A549 (cell line): ENCODE measurements at regions of chr3 and their contacts with region 1.

Region 1: GRCh38 chr3:190566043-190566933 is 52.4 kb downstream of the IL1RAP start:
- DNase-seq: peak; percentile 62 to 98
- ATAC-seq: peak; percentile 98 to 99
- H3K4me3 ChIP-seq: no peak overlapping the region
- H3K27ac ChIP-seq: peak overlapping the region; percentile 89 to 96
- H3K4me1 ChIP-seq: peaks cover 37% of the 10 kb centered on the region
- CTCF ChIP-seq: no peak
- EP300 ChIP-seq: peak; percentile 71 to 87; a peak in 3 of 5 replicates
- POLR2A ChIP-seq: no peak
- RAD21 ChIP-seq: peak in 1 of 2 experiments; percentile 31; a peak in 4 of 5 replicates

Region 2: DNA sequence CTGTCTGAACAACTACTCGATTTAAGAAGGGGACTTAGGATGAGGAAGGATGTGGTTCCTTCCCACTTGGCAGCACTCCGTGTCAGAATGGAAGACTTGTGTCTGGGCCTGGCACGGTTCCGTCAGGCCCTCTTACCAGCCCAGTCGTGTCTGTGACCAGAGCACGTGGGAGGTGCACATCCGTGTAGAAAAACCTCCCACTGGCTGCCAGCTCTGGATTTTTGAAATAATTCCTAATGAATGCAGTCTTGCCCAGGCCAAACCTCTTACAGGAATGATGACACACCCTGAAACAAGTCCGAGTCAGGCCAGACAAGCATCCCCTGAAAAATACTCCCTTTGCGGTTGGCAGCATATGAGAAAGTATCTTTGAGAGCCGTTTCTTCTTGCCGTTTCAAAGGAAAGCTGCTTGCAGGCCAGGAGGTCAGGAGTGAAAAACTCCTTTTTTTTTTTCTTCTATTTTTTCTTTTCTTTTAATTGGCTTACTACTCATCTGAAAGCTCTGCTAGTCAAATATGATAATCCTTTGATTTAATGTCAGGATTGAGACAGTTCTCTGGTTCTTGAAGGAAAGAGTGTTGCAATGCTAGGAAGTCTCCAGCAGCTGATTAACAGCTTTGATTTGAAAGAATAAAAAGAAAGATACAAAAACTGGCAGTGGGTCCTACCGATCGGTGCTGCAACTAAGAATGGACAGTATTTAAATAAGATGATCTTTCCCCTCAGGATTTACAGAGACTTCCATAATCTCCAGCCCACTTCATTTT is 32.6 kb before region 1 on chr3:
- CTCF ChIA-PET with region 1: no interaction called
- POLR2A ChIA-PET with region 1: interaction called, 12 read pairs
- DNase-seq: peak; percentile 43 to 82
- ATAC-seq: peak; percentile 90 to 92
- H3K4me3 ChIP-seq: no peak overlapping the region
- H3K27ac ChIP-seq: peak overlapping the region; percentile 78 to 94
- H3K4me1 ChIP-seq: peaks cover 38% of the 10 kb centered on the region
- CTCF ChIP-seq: no peak
- EP300 ChIP-seq: peak in 1 of 2 experiments; percentile 74; a peak in 1 of 5 replicates
- POLR2A ChIP-seq: no peak
- RAD21 ChIP-seq: no peak; a peak in 1 of 5 replicates

Region 3: DNA sequence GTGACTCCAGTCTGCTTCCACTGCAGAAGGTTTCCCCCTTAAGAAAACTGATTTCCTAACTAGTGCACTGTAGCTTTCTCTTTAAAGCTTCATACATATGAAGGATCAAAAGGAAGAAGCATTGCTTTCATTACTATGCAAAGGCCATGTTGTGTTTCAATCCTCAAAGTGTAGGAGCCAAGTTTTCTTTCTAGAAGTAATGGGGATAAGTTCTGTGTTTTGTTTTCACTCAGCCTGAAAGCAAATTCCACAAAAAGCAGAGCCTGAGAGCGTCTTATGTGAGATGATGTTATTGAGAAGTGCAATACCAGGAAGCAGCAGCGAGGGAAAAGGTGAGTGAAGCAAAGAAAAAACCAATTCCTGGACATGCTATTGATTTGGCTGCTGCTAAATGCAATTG is 196.5 kb after region 1 on chr3:
- CTCF ChIA-PET with region 1: no interaction called
- POLR2A ChIA-PET with region 1: no interaction called
- DNase-seq: no peak
- ATAC-seq: no peak
- H3K4me3 ChIP-seq: no peak overlapping the region
- H3K27ac ChIP-seq: no peak overlapping the region
- H3K4me1 ChIP-seq: no peaks in the 10 kb centered on the region
- CTCF ChIP-seq: no peak
- EP300 ChIP-seq: no peak
- POLR2A ChIP-seq: no peak
- RAD21 ChIP-seq: no peak